Activated CD4-positive, alpha-beta T cell treated with anti-CD3 and anti-CD28 coated beads for 36 hours (primary cell): ENCODE measurements at regions of chr1 and their contacts with region 1.

Region 1: GRCh38 chr1:9942939-9943788 is at the starts of genes LZIC and NMNAT1:
- DNase-seq: peak; percentile 95
- ATAC-seq: peak; percentile 97
- H3K4me3 Mint-ChIP-seq: peak within 1 kb of the TSS; percentile 96
- H3K27ac Mint-ChIP-seq: peak within 1 kb of the TSS; percentile 98
- H3K4me1 Mint-ChIP-seq: peaks cover 18% of the 10 kb centered on the region
- H3K27me3 Mint-ChIP-seq: no peaks in the 10 kb centered on the region
- total RNA-seq, gene LZIC: 23.4 to 32.0 TPM
- total RNA-seq, gene NMNAT1: 7.3 to 8.5 TPM

Region 2: GRCh38 chr1:9588551-9589143 is 354.5 kb before region 1 on chr1 and contains the start of gene TMEM201:
- CTCF ChIA-PET with region 1: no interaction called
- POLR2A ChIA-PET with region 1: no interaction called
- intact Hi-C with region 1: loop called in 1 of 2 experiments (anchors 1 kb)
- DNase-seq: peak; percentile 97
- ATAC-seq: peak; percentile 92
- H3K4me3 Mint-ChIP-seq: peak within 1 kb of the TSS; percentile 80
- H3K27ac Mint-ChIP-seq: peak within 1 kb of the TSS; percentile 79
- H3K4me1 Mint-ChIP-seq: peaks cover 26% of the 10 kb centered on the region
- H3K27me3 Mint-ChIP-seq: no peaks in the 10 kb centered on the region
- total RNA-seq, gene TMEM201: 14.6 to 15.1 TPM

Region 3: GRCh38 chr1:9823943-9824701 is 119.0 kb before region 1 on chr1 and contains the start of gene CLSTN1:
- CTCF ChIA-PET with region 1: no interaction called
- POLR2A ChIA-PET with region 1: no interaction called
- intact Hi-C with region 1: loop called in 1 of 2 experiments (anchors 2 kb)
- DNase-seq: peak; percentile 96
- ATAC-seq: peak; percentile 72
- H3K4me3 Mint-ChIP-seq: peak within 1 kb of the TSS; percentile 96
- H3K27ac Mint-ChIP-seq: peak within 1 kb of the TSS; percentile 89
- H3K4me1 Mint-ChIP-seq: peaks cover 35% of the 10 kb centered on the region
- H3K27me3 Mint-ChIP-seq: peaks cover 9% of the 10 kb centered on the region
- total RNA-seq, gene CLSTN1: 34.9 to 36.7 TPM

Region 4: DNA sequence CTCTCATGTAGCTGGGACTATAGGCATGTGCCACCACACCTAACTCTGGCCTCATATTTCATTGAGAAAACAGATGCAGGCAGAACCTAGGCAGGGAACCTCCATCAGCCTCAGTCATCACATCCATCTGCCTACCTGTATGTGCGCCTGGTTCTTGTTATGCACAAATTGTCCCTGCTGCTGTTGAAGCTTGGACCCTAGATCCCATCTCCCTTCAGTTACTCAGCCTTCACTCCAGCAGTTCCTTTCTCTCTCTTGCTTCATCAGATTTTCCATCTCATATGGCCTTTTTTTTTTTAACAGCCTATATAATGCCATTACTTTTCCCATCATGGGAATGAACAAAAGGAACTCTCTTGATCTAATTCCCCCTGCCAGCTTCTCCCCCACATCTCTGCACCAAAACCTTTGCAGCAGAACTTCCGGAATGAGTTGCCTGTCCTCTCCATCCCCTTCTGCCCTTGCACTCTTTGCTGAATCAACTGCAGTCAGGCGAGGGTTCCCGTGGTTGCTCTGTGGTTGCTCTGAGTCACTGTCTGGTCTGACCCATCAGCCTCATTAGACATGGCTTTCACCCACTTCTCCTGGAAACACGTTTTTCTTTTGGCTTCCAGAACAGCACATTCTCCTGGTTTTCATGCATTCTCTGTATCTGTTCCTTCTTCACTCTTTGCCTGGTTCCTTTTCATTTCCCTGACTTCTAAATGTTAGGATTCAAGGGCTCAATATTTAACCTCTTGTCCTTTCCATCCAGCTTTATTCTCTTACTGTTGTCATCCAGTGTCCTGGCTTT is 131.1 kb after region 1 on chr1:
- CTCF ChIA-PET with region 1: no interaction called
- POLR2A ChIA-PET with region 1: no interaction called
- intact Hi-C with region 1: loop called in 1 of 2 experiments (anchors 1 kb)
- DNase-seq: peak; percentile 84
- ATAC-seq: peak; percentile 98
- H3K4me3 Mint-ChIP-seq: no peak overlapping the region
- H3K27ac Mint-ChIP-seq: no peak overlapping the region
- H3K4me1 Mint-ChIP-seq: peaks cover 12% of the 10 kb centered on the region
- H3K27me3 Mint-ChIP-seq: no peaks in the 10 kb centered on the region

Region 5: GRCh38 chr1:10209905-10210810 is 267.0 kb after region 1 on chr1 and contains the start of gene KIF1B:
- CTCF ChIA-PET with region 1: interaction called, 4 read pairs
- POLR2A ChIA-PET with region 1: no interaction called
- intact Hi-C with region 1: loop called in 1 of 2 experiments (anchors 1 kb)
- DNase-seq: peak; percentile 97
- ATAC-seq: peak; percentile 98
- H3K4me3 Mint-ChIP-seq: peak within 1 kb of the TSS; percentile 76
- H3K27ac Mint-ChIP-seq: peak within 1 kb of the TSS; percentile 74
- H3K4me1 Mint-ChIP-seq: peaks cover 31% of the 10 kb centered on the region
- H3K27me3 Mint-ChIP-seq: no peaks in the 10 kb centered on the region
- total RNA-seq, gene KIF1B: 12.3 to 13.5 TPM